Heart left ventricle (tissue), 16 donors: ENCODE measurements at regions of chr1 and their contacts with region 1.

Region 1: GRCh38 chr1:228131766-228132165 is 8.3 kb upstream of the GUK1 start:
- DNase-seq: no peak
- ATAC-seq: no peak
- H3K4me3 ChIP-seq: no peak overlapping the region
- H3K27ac ChIP-seq: no peak overlapping the region
- H3K4me1 ChIP-seq: peaks cover 0 to 8% (median 2%) of the 10 kb centered on the region in 12 donors
- H3K27me3 ChIP-seq: peaks cover 0 to 10% (median 0%) of the 10 kb centered on the region in 9 donors
- CTCF ChIP-seq: no peak
- POLR2A ChIP-seq: no peak

Region 2: GRCh38 chr1:228082135-228082891 is 49.5 kb before region 1 on chr1 and contains the start of gene ARF1:
- intact Hi-C with region 1: no loop called
- DNase-seq: peak; percentile 93 to 96 (median 93)
- ATAC-seq: peak; percentile 88 to 95 (median 94)
- H3K4me3 ChIP-seq: peak within 1 kb of the TSS; percentile 67 to 100 (median 96)
- H3K27ac ChIP-seq: peak within 1 kb of the TSS; percentile 95 to 100 (median 99)
- H3K4me1 ChIP-seq: peaks cover 27 to 59% (median 48%) of the 10 kb centered on the region in 12 donors
- H3K27me3 ChIP-seq: no peaks in the 10 kb centered on the region
- CTCF ChIP-seq: peak in 6 of 12 donors; percentile 19 to 45 (median 30)
- POLR2A ChIP-seq: peak; percentile 67 to 90
- total RNA-seq, gene ARF1: 271 to 451 (median 310) TPM

Region 3: DNA sequence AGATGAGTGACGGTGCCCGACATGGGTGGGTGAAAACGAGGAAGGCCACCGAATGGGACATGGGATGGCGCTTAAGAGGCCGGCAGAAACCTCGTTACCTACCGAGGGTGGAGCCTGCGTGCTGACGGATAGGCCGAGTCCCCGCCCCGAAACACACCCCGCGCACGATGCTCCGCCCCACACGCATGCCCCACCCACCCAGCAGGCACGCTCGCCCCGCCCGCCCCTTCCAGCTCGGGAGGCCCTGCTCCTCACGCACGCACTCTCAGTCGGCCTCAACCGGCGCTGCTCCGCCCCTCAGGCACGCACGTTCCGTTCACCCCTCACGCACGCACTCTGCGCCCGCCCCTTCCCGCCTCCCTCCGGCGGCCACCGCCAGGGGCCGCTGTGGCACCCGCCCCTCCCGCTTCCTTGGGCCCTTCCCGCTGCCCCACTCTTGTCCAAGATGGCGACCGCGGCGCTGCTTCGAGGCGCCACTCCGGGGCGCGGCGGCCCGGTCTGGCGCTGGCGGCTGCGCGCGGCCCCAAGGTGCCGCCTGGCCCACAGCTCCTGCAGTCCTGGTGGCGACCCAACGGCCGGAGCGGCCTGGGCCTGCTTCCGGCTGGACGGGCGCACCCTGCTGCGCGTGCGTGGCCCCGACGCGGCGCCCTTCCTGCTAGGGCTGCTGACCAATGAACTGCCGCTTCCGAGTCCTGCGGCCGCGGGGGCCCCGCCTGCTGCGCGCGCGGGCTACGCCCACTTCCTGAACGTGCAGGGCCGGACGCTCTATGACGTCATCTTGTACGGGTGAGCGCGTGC is 33.8 kb after region 1 on chr1 and contains the start of gene IBA57:
- intact Hi-C with region 1: loop called in 5 of 10 experiments (anchors 5 to 10 kb)
- DNase-seq: peak; percentile 100
- ATAC-seq: peak; percentile 86 to 94 (median 89)
- H3K4me3 ChIP-seq: peak within 1 kb of the TSS; percentile 33 to 88 (median 74)
- H3K27ac ChIP-seq: peak within 1 kb of the TSS; percentile 89 to 100 (median 100)
- H3K4me1 ChIP-seq: peaks cover 0 to 57% (median 43%) of the 10 kb centered on the region in 12 donors
- H3K27me3 ChIP-seq: peaks cover 0 to 10% (median 0%) of the 10 kb centered on the region in 9 donors
- CTCF ChIP-seq: peak; percentile 80 to 97 (median 91)
- POLR2A ChIP-seq: peak; percentile 42 to 87
- total RNA-seq, gene IBA57: 8.7 to 18.6 (median 12.3) TPM

Region 4: GRCh38 chr1:228393248-228393699 is 261.5 kb after region 1 on chr1:
- intact Hi-C with region 1: loop called in 1 of 10 experiments (anchors 5 kb)
- DNase-seq: peak in 4 of 5 donors; percentile 56 to 73 (median 69)
- ATAC-seq: peak; percentile 82 to 90 (median 86)
- H3K4me3 ChIP-seq: no peak overlapping the region
- H3K27ac ChIP-seq: peak overlapping the region in 7 of 12 donors; percentile 27 to 60 (median 50)
- H3K4me1 ChIP-seq: peaks cover 0 to 17% (median 10%) of the 10 kb centered on the region in 12 donors
- H3K27me3 ChIP-seq: no peaks in the 10 kb centered on the region
- CTCF ChIP-seq: peak; percentile 32 to 68 (median 54)
- POLR2A ChIP-seq: no peak

Region 5: GRCh38 chr1:228457396-228458176 is 325.8 kb after region 1 on chr1:
- intact Hi-C with region 1: no loop called
- DNase-seq: peak; percentile 86 to 91 (median 89)
- ATAC-seq: peak; percentile 95 to 96 (median 96)
- H3K4me3 ChIP-seq: peak overlapping the region; percentile 31 to 79 (median 63)
- H3K27ac ChIP-seq: peak overlapping the region; percentile 65 to 96 (median 88)
- H3K4me1 ChIP-seq: peaks cover 0 to 52% (median 14%) of the 10 kb centered on the region in 12 donors
- H3K27me3 ChIP-seq: peaks cover 0 to 40% (median 19%) of the 10 kb centered on the region in 9 donors
- CTCF ChIP-seq: peak in 9 of 12 donors; percentile 7 to 56 (median 30)
- POLR2A ChIP-seq: peak in 1 of 2 donors; percentile 70

Region 6: GRCh38 chr1:228510101-228510802 is 378.5 kb after region 1 on chr1:
- intact Hi-C with region 1: loop called in 7 of 10 experiments (anchors 5 kb)
- DNase-seq: peak in 1 of 5 donors; percentile 5
- ATAC-seq: no peak
- H3K4me3 ChIP-seq: no peak overlapping the region
- H3K27ac ChIP-seq: no peak overlapping the region
- H3K4me1 ChIP-seq: no peaks in the 10 kb centered on the region
- H3K27me3 ChIP-seq: peaks cover 0 to 4% (median 0%) of the 10 kb centered on the region in 9 donors
- CTCF ChIP-seq: no peak
- POLR2A ChIP-seq: no peak

Region 7: DNA sequence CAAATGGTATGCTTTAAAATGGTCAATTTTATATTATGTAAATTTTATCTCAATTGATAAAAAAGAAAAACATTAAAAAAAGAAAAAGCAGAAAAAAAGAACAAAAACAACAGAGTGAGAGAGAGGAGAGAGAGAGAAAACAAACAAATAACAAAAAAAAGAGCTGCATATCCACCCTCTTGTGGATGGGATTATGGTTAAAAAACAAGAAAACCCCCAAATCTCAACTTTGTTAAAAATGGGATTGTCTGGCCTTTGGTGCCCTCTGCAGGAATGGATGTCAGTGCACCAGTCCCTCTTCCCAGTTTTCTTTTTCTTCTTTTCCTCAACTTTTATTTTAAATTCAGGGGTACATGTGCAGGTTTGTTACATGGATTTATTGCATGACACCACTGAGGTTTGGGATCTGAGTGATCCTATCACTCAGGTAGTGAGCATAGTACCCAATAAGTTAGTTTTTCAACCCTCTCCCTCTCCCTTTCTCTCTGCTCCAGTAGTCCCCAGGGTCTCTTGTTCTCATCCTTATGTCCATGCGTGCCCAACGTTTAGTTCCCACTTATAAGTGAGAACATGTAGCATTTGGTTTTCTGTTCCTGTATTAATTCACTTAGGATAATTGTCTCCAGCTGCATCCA is 383.6 kb after region 1 on chr1:
- intact Hi-C with region 1: loop called in 7 of 10 experiments (anchors 5 kb)
- DNase-seq: no peak
- ATAC-seq: peak in 1 of 4 donors; percentile 20
- H3K4me3 ChIP-seq: no peak overlapping the region
- H3K27ac ChIP-seq: no peak overlapping the region
- H3K4me1 ChIP-seq: no peaks in the 10 kb centered on the region
- H3K27me3 ChIP-seq: peaks cover 0 to 29% (median 0%) of the 10 kb centered on the region in 9 donors
- CTCF ChIP-seq: peak; percentile 30 to 76 (median 64)
- POLR2A ChIP-seq: no peak